Activated CD4-positive, alpha-beta memory T cell treated with anti-CD3 and anti-CD28 coated beads for 36 hours (primary cell): ENCODE measurements at regions of chr14 and their contacts with region 1.

Region 1: DNA sequence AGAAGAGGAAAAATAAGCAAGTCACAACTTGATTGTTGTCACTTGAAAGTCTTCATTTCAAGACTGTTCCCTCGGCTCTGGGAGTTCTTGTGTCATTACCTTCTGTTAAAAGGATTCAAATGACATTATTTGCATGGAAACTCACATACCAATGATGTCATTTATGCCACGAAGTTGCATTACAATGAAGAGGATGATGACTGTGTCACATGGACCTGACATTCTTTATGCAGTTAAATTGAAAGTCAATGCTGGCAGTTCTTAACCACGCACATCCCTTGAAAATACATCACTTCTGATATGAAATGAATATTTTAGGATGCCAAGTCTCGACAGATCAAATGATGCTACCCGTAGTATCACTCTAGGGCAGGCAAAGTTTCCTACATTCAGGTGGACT is 1069.5 kb downstream of the VRK1 start:
- DNase-seq: no peak
- H3K4me3 Mint-ChIP-seq: no peak overlapping the region
- H3K27ac Mint-ChIP-seq: no peak overlapping the region
- H3K4me1 Mint-ChIP-seq: peaks cover 7% of the 10 kb centered on the region
- H3K27me3 Mint-ChIP-seq: no peaks in the 10 kb centered on the region

Region 2: DNA sequence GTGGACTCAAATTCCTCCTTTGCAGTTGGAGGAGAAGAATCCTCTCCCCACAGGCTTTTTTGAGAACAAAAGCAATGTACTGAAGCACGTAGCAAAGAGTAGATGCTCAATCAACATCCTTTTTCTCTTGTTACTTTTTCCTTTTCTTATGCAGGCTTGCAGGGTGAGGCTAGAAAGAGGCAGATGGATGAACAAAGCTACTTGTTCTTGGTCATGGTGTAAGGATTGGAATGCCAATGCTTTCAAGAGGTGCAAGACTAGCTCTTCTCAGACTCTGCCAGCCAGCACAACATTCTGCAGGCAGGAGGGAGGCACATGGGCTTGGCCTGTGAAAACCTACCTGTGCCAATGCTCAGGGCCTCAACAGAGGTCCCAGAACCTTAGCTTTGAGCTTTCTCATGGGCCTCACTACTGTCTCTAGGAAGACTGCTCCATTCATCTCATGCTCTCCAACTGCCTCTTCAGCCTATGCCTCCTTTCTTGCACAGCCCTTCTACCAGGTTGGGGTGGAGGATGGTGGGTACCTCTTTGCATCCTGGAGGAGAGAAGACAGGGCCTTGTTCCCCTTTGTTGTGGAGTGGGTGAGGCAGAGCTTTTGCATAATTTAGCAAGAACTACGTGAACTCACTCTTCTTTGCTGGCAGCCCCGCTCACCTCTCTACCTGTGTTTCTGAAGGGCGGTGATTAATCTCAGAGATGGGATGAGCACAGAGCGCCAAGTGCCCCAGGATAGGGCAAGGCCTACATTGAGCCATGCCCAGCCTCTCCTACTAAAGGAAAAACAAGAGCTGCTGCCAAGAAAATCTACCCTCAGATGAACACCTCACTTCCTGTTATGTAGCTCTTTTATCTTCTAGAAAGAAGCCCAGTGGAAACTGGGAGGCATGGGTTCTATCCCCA is 50.3 kb after region 1 on chr14:
- CTCF ChIA-PET with region 1: no interaction called
- POLR2A ChIA-PET with region 1: no interaction called
- intact Hi-C with region 1: loop called (anchors 2 kb)
- DNase-seq: no peak
- H3K4me3 Mint-ChIP-seq: no peak overlapping the region
- H3K27ac Mint-ChIP-seq: no peak overlapping the region
- H3K4me1 Mint-ChIP-seq: peaks cover 14% of the 10 kb centered on the region
- H3K27me3 Mint-ChIP-seq: no peaks in the 10 kb centered on the region

Region 3: GRCh38 chr14:97948841-97949240 is 82.2 kb after region 1 on chr14:
- CTCF ChIA-PET with region 1: no interaction called
- POLR2A ChIA-PET with region 1: no interaction called
- intact Hi-C with region 1: loop called (anchors 10 kb)
- DNase-seq: no peak
- H3K4me3 Mint-ChIP-seq: no peak overlapping the region
- H3K27ac Mint-ChIP-seq: no peak overlapping the region
- H3K4me1 Mint-ChIP-seq: peaks cover 11% of the 10 kb centered on the region
- H3K27me3 Mint-ChIP-seq: no peaks in the 10 kb centered on the region